CD8-positive, alpha-beta T cell (primary cell): ENCODE measurements at regions of chr3 and their contacts with region 1.

Region 1: GRCh38 chr3:122101646-122102045 is 46.5 kb downstream of the CD86 start:
- DNase-seq: peak in 3 of 9 experiments; percentile 16 to 78 (median 67)
- ATAC-seq: peak; percentile 72
- H3K4me3 ChIP-seq: no peak overlapping the region
- H3K4me3 Mint-ChIP-seq: no peak overlapping the region
- H3K27ac ChIP-seq: no peak overlapping the region
- H3K27ac Mint-ChIP-seq: no peak overlapping the region
- H3K4me1 ChIP-seq: peaks cover 6% of the 10 kb centered on the region
- H3K4me1 Mint-ChIP-seq: peaks cover 15% of the 10 kb centered on the region
- H3K27me3 ChIP-seq: no peaks in the 10 kb centered on the region
- H3K27me3 Mint-ChIP-seq: no peaks in the 10 kb centered on the region
- CTCF ChIP-seq: peak; percentile 39

Region 2: GRCh38 chr3:122281891-122282290 is 180.2 kb after region 1 on chr3:
- CTCF ChIA-PET with region 1: no interaction called
- POLR2A ChIA-PET with region 1: no interaction called
- intact Hi-C with region 1: no loop called
- DNase-seq: no peak
- ATAC-seq: no peak
- H3K4me3 ChIP-seq: no peak overlapping the region
- H3K4me3 Mint-ChIP-seq: no peak overlapping the region
- H3K27ac ChIP-seq: no peak overlapping the region
- H3K27ac Mint-ChIP-seq: no peak overlapping the region
- H3K4me1 ChIP-seq: no peaks in the 10 kb centered on the region
- H3K4me1 Mint-ChIP-seq: no peaks in the 10 kb centered on the region
- H3K27me3 ChIP-seq: no peaks in the 10 kb centered on the region
- H3K27me3 Mint-ChIP-seq: peaks cover 2% of the 10 kb centered on the region
- CTCF ChIP-seq: no peak

Region 3: DNA sequence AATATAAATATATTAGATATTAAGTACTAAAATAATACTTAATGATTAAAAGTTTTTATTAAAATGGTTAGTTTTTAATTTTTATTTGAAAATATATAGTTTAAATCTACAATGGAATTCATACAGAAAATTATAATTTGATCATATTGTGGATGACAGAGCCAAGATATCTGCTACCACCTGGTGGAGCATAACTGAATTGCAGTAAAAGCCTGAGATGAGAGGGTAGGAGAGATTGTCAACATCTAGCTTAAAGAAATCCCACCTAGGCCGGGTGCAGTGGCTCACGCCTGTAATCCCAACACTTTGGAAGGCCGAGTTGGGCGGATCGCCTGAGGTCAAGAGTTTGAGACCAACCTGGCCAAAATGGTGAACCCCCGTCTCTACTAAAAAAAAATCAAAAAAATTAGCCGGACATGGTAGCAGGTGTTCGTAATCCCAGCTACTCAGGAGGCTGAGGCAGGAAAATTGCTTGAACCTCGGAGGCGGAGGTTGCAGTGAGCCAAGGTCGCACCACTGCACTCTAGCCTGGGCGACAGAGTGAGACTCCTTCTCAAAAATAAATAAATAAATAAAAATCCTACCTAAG is 198.3 kb after region 1 on chr3:
- CTCF ChIA-PET with region 1: interaction called, 57 read pairs
- POLR2A ChIA-PET with region 1: no interaction called
- intact Hi-C with region 1: loop called (anchors 1 kb)
- DNase-seq: peak in 5 of 9 experiments; percentile 7 to 74 (median 54)
- ATAC-seq: no peak
- H3K4me3 ChIP-seq: no peak overlapping the region
- H3K4me3 Mint-ChIP-seq: no peak overlapping the region
- H3K27ac ChIP-seq: no peak overlapping the region
- H3K27ac Mint-ChIP-seq: no peak overlapping the region
- H3K4me1 ChIP-seq: peaks cover 5% of the 10 kb centered on the region
- H3K4me1 Mint-ChIP-seq: peaks cover 8% of the 10 kb centered on the region
- H3K27me3 ChIP-seq: no peaks in the 10 kb centered on the region
- H3K27me3 Mint-ChIP-seq: no peaks in the 10 kb centered on the region
- CTCF ChIP-seq: peak; percentile 84

Region 4: GRCh38 chr3:122305818-122306621 is 204.4 kb after region 1 on chr3:
- CTCF ChIA-PET with region 1: interaction called, 57 read pairs
- POLR2A ChIA-PET with region 1: interaction called, 3 read pairs
- intact Hi-C with region 1: no loop called
- DNase-seq: peak in 2 of 9 experiments; percentile 10 to 25
- ATAC-seq: no peak
- H3K4me3 ChIP-seq: no peak overlapping the region
- H3K4me3 Mint-ChIP-seq: no peak overlapping the region
- H3K27ac ChIP-seq: no peak overlapping the region
- H3K27ac Mint-ChIP-seq: no peak overlapping the region
- H3K4me1 ChIP-seq: no peaks in the 10 kb centered on the region
- H3K4me1 Mint-ChIP-seq: no peaks in the 10 kb centered on the region
- H3K27me3 ChIP-seq: no peaks in the 10 kb centered on the region
- H3K27me3 Mint-ChIP-seq: no peaks in the 10 kb centered on the region
- CTCF ChIP-seq: no peak

Region 5: DNA sequence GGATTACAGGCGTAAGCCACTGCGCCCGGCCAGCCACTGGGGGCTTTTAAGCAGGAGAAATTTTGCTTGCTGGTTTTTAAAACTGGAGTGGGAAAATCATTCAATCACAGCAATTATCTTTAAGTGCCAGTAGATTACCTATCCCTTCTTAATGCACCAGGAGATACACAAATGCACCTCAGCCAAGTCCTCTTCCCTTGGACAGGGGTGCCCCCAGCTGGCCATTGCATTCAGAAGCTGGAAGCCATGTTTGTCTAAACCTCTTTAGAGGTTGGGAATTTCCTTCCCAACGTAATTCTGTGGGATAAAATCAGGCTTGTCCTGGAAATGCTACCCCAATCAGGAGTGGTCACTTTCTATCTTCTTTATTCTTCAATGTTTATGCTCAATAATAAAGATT is 254.8 kb after region 1 on chr3:
- CTCF ChIA-PET with region 1: interaction called, 4 read pairs
- POLR2A ChIA-PET with region 1: no interaction called
- intact Hi-C with region 1: loop called in 1 of 2 experiments (anchors 2 kb)
- DNase-seq: peak in 4 of 9 experiments; percentile 7 to 46 (median 20)
- ATAC-seq: no peak
- H3K4me3 ChIP-seq: no peak overlapping the region
- H3K4me3 Mint-ChIP-seq: no peak overlapping the region
- H3K27ac ChIP-seq: no peak overlapping the region
- H3K27ac Mint-ChIP-seq: no peak overlapping the region
- H3K4me1 ChIP-seq: no peaks in the 10 kb centered on the region
- H3K4me1 Mint-ChIP-seq: no peaks in the 10 kb centered on the region
- H3K27me3 ChIP-seq: no peaks in the 10 kb centered on the region
- H3K27me3 Mint-ChIP-seq: no peaks in the 10 kb centered on the region
- CTCF ChIP-seq: no peak

Region 6: DNA sequence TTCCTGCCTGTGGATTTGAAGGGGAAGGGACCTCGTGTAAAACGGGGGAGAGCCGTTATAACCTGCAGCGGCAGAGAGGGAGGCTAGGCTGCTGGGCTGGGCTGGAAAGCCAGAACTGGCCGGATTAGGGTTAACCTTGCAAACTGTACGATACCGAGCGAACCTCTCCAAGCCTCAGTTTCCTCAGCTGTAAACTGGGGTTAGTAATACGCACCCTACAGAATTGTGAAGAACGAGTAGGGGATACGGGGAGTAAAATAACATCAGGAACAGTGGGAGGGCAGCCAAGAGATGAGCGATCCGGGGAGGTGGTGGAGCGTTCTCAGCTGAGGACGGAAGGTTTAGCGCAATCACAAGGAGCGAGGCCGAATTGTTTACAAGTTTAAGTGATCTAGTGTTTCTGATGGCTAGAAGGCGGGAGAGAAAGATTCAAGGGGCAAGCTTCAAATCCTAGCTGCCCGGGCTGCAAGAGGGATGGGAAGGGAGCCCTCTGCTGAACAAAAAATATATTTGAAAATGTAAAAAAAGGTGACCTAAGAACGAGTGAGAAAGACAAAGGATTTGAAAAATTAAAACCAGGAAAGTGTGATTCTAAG is 926.7 kb after region 1 on chr3:
- CTCF ChIA-PET with region 1: interaction called, 4 read pairs
- POLR2A ChIA-PET with region 1: no interaction called
- intact Hi-C with region 1: loop called in 1 of 2 experiments (anchors 5 kb)
- DNase-seq: peak in 3 of 9 experiments; percentile 13 to 54 (median 45)
- ATAC-seq: no peak
- H3K4me3 ChIP-seq: peak overlapping the region; percentile 46 to 49
- H3K4me3 Mint-ChIP-seq: peak overlapping the region; percentile 76
- H3K27ac ChIP-seq: no peak overlapping the region
- H3K27ac Mint-ChIP-seq: no peak overlapping the region
- H3K4me1 ChIP-seq: peaks cover 7% of the 10 kb centered on the region
- H3K4me1 Mint-ChIP-seq: peaks cover 22% of the 10 kb centered on the region
- H3K27me3 ChIP-seq: peaks cover 16 to 28% of the 10 kb centered on the region in 2 experiments
- H3K27me3 Mint-ChIP-seq: peaks cover 56% of the 10 kb centered on the region
- CTCF ChIP-seq: peak; percentile 17